Upper lobe of right lung (tissue), 1 donor: ENCODE measurements at regions of chr1 and their contacts with region 1.

Region 1: DNA sequence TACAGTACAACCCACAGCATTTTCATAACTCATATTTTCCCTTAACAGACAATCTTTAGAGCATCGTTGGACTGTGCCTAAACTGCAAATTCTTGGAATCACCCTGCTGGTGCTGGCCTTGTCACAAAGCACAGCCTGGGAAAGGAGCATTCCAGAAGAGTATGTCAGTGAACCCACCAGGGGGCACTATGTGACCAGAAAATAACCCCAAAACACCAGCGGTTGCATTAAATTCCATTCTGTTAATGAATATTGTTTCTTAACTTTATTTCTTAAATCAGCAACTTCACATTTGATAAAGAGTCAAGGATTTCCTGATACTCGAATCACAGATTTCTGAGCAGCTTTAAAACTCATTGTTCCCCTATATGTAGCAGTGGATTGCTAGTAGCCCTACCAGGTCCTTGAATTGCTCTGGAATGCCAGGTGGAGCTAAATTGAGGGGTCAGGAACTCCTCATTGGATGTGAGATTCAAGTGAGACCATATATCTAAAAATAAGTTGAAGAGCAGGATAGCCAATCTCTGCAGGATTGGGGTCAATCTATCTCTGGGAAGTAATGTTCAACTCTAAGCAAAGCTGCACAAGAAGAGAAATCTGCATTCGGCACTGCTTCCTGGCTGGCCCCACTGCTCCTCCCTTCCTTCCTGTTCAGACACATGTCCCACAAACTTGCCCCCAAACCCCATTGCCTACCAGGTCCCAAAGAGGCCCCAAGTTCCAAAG is 12.7 kb upstream of the RAB4A start:
- DNase-seq: no peak
- ATAC-seq: peak; percentile 94
- H3K4me3 ChIP-seq: no peak overlapping the region
- H3K27ac ChIP-seq: no peak overlapping the region
- H3K4me1 ChIP-seq: peaks cover 8% of the 10 kb centered on the region
- H3K27me3 ChIP-seq: no peaks in the 10 kb centered on the region
- CTCF ChIP-seq: peak; percentile 91

Region 2: DNA sequence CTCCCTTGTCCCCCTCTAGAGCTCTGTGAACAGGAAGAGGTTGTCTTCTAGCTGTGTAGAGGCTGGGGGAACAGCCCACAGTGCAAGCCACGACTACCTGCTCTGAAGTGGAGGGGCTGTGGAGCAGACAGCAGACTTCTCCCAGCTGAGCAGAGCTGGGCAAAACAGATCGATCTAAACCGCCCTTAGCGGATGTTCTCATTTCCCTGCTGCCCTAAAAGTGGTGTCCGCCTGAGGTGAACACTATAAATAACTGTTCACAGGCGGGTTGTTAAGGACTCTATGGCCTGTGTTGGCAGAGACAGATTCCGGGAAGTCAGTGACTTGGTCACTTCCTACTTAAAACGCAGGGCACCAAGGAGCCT is 319.7 kb before region 1 on chr1:
- intact Hi-C with region 1: no loop called
- DNase-seq: no peak
- ATAC-seq: peak; percentile 77
- H3K4me3 ChIP-seq: no peak overlapping the region
- H3K27ac ChIP-seq: peak overlapping the region; percentile 73
- H3K4me1 ChIP-seq: peaks cover 32% of the 10 kb centered on the region
- H3K27me3 ChIP-seq: no peaks in the 10 kb centered on the region
- CTCF ChIP-seq: no peak

Region 3: GRCh38 chr1:229440851-229441537 is 182.8 kb after region 1 on chr1:
- intact Hi-C with region 1: no loop called
- DNase-seq: no peak
- ATAC-seq: no peak
- H3K4me3 ChIP-seq: no peak overlapping the region
- H3K27ac ChIP-seq: no peak overlapping the region
- H3K4me1 ChIP-seq: no peaks in the 10 kb centered on the region
- H3K27me3 ChIP-seq: no peaks in the 10 kb centered on the region
- CTCF ChIP-seq: no peak

Region 4: DNA sequence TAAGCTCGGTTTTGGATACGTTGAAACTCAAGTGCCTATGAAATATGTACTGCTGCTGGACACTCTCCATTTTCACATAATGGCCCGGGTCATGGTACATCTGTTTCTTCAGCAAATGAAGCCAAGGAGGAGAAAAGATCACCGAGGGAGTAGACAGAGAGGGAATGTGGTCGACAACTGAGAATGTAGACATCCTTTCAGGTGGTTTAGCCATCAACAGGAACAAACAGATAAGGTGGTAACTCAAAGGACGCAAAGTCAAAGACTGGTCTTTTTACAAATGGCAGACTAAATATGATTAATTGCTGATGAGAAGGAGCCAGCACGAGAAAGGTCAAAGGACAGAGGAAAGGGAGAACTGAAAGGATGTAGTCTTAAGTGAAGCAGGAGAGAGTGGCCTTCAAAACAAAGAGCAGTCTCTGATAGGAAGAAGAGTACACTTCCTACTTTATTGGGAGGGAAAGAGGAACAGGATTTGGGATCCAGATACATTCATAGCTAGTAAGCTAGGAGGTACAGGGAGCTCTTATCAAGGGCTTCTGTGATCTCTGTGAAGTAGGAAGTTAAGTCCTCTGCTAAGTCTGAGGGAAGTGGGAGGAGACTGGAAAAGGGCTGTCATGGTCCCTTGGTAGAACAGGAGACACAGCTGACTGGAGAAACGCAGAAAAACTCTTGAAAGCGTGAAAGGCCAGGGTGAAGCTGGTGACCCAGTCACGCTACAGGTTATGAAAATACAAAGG is 221.6 kb after region 1 on chr1:
- intact Hi-C with region 1: loop called (anchors 10 kb)
- DNase-seq: no peak
- ATAC-seq: no peak
- H3K4me3 ChIP-seq: no peak overlapping the region
- H3K27ac ChIP-seq: no peak overlapping the region
- H3K4me1 ChIP-seq: no peaks in the 10 kb centered on the region
- H3K27me3 ChIP-seq: no peaks in the 10 kb centered on the region
- CTCF ChIP-seq: no peak